PC-9 (cell line): ENCODE measurements at regions of chr7 and their contacts with region 1.

Region 1: DNA sequence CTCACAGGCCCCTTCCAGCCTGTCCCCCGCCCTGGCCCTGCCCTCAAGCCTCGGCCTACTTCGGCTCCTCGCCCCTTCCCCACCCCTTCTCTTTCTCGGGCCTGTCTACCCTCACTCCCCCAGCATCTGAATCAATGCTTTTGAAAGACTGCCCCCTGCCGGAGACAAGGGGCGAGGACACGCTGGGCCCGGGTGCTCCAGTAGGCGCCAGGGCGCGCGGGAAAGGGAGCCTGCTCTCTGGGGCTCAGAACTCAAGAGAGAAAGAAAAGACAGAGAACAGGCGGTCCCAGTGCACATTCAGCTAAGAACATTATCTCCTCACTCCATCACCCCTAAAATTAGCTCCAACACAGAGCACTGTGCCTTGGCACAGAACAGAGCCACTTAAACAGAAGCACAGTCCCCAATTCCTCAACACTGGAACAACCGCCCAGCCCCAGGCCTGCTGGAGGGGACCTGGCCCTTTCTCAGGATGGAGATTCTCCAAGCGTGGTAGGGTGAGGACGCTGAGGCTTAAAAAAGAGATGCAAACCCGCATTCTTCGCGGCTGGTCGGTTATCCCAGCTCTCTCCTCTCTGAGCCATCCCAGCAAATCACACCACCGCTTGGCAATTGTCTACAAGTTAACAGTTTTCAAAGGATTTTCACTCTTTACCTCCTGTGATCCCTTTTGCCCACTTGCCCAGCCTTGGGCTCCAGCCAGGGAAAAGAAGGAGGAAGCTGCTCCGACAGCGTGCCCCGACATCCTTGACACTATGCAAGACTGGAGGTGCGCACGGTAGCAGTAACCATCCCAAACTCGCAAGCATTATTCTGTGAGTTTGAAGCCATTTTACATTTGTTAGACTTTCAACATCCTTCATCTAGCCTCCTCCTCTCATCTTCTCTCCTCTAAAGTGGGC is 2.1 kb downstream of the GIGYF1 start:
- DNase-seq: peak in 1 of 2 experiments; percentile 72
- H3K4me3 ChIP-seq: peak overlapping the region; percentile 97; the same call in 1 of the 2 replicates
- H3K27ac ChIP-seq: no peak overlapping the region
- H3K4me1 ChIP-seq: peaks cover 13% of the 10 kb centered on the region
- H3K27me3 ChIP-seq: no peaks in the 10 kb centered on the region
- CTCF ChIP-seq: peak; percentile 95

Region 2: DNA sequence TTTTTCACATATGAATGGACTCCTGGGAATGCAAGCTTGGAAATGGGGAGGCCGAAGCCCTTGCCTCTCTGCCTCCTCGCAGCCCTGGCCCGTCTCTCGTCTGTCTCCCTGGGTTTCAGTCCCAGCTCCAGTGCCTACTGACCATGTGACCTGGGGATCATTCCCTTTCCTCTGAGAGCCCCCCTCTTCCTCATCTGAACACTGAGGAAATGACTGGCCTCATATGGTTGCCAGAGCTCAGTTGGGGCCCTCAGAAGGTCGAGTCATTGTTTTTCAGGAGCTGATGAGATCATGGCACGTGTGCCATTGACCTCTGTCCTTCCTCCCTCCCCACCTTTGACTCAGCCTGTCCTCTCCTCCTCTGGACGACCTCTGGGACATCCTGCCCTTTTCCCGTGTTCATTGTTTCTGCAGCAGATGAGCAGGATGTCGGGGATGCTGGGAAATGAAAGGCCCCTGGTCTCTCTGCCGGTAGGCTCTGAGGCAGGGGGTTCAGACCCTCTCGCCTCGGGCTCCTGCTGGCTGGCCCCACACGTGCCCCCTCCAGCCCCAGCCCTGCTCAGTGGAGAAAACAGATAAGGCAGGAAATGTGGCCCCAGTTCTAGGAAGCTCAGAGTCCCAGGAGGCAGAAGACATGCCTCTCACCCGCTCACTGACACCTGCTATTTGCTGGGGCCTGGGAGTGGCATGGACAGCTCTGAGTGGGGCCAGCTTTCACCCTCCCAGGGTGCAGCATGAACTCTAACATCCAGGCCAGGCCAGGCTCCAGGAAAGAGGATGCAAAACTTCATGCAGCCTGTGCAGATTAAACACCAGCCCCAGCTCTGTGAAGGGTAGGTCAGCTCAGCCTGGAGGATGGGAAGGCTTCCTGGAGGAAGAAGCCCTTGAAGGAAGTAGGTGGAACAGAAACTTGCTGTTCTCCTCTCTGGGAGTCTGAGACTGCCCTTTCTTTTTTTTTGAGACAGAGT is 247.3 kb before region 1 on chr7:
- CTCF ChIA-PET with region 1: interaction called, 17 read pairs
- POLR2A ChIA-PET with region 1: no interaction called
- intact Hi-C with region 1: no loop called
- DNase-seq: no peak
- H3K4me3 ChIP-seq: no peak overlapping the region
- H3K27ac ChIP-seq: no peak overlapping the region
- H3K4me1 ChIP-seq: peaks cover 14% of the 10 kb centered on the region
- H3K27me3 ChIP-seq: no peaks in the 10 kb centered on the region
- CTCF ChIP-seq: no peak

Region 3: DNA sequence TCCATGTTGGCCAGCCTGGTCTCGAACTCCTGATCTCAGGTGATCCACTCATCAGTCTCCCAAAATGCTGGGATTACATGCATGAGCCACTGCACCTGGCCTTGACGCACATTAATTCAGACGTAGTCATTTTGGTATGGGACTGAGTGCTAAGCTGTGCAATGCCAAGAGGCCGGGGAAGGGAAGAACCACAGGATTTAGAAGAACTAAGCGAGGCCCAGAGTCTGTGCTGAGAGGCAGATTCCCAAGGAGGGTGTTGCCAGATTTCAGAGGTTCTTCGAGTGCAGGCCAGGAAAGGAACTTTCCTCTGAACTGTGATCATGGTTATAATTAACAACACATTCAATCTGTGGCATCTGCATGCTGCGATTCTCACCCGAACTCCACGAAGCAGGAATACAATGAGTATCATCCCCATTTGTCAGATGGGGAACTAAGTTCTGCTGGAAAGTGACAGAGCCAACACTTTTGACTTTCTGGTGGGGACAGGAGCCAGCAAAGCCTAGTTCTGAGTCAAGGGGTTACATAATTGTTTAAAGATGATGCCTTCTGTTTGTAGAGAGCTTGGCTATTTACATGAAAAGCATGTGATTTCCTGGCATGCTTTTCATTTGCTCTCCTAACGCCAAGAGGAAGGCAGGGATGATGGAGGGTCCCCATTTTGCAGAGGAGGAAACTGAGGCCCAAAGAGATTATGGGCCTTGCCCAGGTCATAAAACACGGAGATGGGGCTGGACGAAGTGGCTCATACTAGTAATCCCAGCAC is 35.3 kb after region 1 on chr7:
- CTCF ChIA-PET with region 1: no interaction called
- POLR2A ChIA-PET with region 1: no interaction called
- intact Hi-C with region 1: no loop called
- DNase-seq: no peak
- H3K4me3 ChIP-seq: no peak overlapping the region
- H3K27ac ChIP-seq: no peak overlapping the region
- H3K4me1 ChIP-seq: peaks cover 19% of the 10 kb centered on the region
- H3K27me3 ChIP-seq: no peaks in the 10 kb centered on the region
- CTCF ChIP-seq: no peak